Left ventricle myocardium superior (tissue), 1 donor: ENCODE measurements at regions of chr11 and their contacts with region 1.

Region 1: DNA sequence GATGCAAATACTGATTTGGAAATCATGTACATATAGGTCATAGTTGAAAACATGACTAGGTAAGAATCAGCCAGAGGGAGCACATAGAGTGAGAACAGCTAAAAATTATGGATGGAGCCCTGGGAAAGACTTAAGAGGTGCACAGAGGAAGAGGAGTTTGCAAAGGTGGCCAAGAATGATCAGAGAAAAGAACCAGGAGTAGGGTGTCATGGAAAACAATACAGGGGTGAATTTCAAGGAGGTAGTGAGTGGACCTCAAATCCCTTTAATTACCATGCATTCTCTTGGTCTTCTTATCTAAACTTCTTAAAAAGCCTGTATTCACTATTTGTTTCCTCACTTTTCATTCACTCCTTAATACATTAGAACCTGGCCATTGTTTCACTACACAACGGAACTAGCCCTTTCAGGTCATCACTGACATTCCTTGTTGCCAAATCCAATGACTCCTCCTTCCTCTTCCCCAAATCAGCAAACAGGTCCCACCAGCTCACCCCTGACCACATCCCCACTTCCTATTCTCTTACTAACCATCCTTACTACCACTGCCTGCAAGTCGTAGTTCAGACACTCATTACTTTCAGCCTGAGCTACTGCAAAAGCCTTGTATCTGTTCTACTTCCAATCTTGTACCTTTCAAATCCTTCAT is 22.6 kb downstream of the BUD13 start:
- DNase-seq: no peak
- ATAC-seq: no peak

Region 2: GRCh38 chr11:114964676-114965214 is 1785.4 kb before region 1 on chr11:
- intact Hi-C with region 1: no loop called
- DNase-seq: no peak
- ATAC-seq: no peak

Region 3: GRCh38 chr11:116718955-116719501 is 31.2 kb before region 1 on chr11:
- intact Hi-C with region 1: loop called (anchors 2 kb)
- DNase-seq: no peak
- ATAC-seq: no peak

Region 4: DNA sequence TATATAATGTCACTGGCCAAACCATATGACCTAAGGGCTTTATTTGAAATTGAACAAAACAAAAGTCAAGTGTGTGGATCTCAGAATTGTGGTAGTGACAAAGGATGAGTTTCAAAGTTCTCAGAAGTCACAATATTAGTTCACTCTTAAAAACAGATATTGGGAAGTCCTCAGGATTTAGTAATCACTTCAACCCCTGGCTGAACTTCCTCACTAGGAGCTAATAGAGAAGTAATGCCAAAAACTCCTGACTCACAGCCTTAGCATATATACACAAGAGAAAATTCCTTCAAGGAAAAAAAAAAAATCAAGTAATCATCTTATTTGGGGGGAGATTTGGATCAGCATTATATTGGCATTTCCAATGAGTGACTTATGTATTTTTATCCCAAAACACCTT is 162.8 kb after region 1 on chr11:
- intact Hi-C with region 1: no loop called
- DNase-seq: no peak
- ATAC-seq: peak; percentile 43